Lower leg skin (tissue), 4 donors: ENCODE measurements at regions of chr17 and their contacts with region 1.

Region 1: DNA sequence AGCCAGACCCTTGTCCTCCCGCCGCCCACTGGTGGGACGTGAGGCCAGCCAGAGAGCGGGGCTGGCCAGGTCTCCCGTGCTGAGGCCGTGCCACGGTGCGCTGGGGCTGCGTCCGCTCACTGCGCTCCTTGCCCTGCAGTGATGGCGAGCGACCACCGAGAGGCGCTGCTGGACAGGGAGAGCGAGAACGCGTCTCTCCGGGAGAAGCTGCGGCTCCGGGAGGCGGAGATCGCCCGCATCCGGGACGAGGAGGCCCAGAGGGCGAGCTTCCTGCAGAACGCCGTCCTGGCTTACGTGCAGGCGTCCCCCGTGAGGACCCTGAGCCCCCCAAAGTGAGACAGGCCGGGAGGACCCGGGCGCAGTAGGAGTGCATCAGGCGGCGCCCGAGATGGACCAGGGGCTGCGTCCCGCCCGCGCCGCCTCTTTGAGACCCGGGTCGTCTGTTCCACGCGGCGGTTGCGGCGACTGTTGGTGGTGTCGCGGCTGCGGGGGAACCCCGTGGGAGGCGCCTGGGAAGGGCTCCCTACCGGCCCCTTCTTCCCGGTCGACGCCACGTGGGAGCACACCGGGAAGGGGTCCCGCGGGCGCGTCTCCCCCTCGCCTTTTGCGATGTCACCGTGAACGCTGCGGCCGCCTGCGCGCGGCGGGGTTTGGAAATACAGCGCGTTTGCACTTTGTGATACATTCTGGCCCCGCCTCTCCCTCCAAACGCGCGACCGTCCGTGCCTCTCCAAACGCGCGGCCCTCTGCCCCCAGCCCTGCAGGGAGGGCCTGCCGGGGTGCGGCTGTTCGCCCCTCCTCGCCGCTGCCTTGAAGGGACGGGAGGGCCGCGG is 792 bp upstream of the RAC3 start:
- DNase-seq: peak; percentile 67 to 97
- H3K4me3 ChIP-seq: peak overlapping the region; percentile 17
- CTCF ChIP-seq: peak in 1 of 3 donors; percentile 80
- POLR2A ChIP-seq: no peak

Region 2: GRCh38 chr17:82153745-82154375 is 123.2 kb after region 1 on chr17:
- intact Hi-C with region 1: loop called (anchors 2 kb)
- DNase-seq: peak; percentile 74 to 95
- H3K4me3 ChIP-seq: no peak overlapping the region
- CTCF ChIP-seq: peak in 1 of 3 donors; percentile 67
- POLR2A ChIP-seq: no peak

Region 3: DNA sequence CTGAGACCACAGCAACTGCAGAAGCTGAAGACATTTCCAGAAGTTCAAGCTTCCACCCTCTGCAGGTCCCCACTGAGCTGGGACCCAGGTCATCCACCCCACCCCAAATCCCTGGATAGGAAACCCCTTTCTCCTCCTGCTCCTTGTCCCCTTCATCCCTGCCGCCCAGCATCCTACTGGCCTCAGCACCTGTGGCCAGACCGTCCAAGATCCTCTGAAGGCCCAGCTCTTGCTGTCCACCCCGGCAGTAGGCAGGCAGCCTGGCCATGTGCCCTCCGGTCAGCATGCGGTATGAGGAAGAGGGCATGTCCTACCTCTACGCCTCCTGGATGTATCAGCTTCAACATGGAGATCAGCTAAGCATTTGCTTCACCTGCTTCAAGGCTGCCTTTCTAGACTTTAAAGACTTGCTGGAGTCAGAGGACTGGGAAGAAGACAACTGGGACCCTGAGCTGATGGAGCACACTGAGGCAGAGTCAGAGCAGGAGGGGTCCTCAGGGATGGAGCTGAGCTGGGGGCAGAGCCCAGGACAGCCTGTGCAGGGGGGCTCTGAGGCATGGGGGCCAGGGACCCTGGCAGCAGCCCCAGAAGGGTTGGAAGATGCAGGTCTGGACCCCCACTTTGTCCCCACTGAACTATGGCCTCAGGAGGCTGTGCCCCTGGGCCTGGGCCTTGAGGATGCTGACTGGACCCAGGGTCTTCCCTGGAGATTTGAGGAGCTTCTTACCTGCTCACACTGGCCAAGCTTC is 331.4 kb after region 1 on chr17:
- intact Hi-C with region 1: loop called (anchors 5 kb)
- DNase-seq: no peak
- H3K4me3 ChIP-seq: no peak overlapping the region
- CTCF ChIP-seq: no peak
- POLR2A ChIP-seq: no peak

Region 4: GRCh38 chr17:82457997-82458864 is 427.5 kb after region 1 on chr17 and contains the start of gene NARF:
- intact Hi-C with region 1: no loop called
- DNase-seq: peak; percentile 97 to 99
- H3K4me3 ChIP-seq: peak within 1 kb of the TSS; percentile 80
- CTCF ChIP-seq: peak in 1 of 3 donors; percentile 22
- POLR2A ChIP-seq: peak in 1 of 2 donors; percentile 96
- total RNA-seq, gene NARF: 39.9 to 59.2 (median 44.3) TPM